ENCODE measurements at regions of chr3 and their contacts with region 1.

Region 1: GRCh38 chr3:73520865-73521461 is 103.8 kb downstream of the PDZRN3 start:
- DNase-seq: peak; percentile 61 to 90
- H3K4me3 ChIP-seq: peak overlapping the region; percentile 43 to 51
- H3K27ac ChIP-seq: peak overlapping the region; percentile 78 to 93
- H3K4me1 ChIP-seq: peaks cover 0 to 83% (median 45%) of the 10 kb centered on the region in 4 donors
- H3K27me3 ChIP-seq: no peaks in the 10 kb centered on the region
- CTCF ChIP-seq: no peak

Region 2: GRCh38 chr3:73480187-73480672 is 40.7 kb before region 1 on chr3:
- intact Hi-C with region 1: no loop called
- DNase-seq: no peak
- H3K4me3 ChIP-seq: no peak overlapping the region
- H3K27ac ChIP-seq: no peak overlapping the region
- H3K4me1 ChIP-seq: peaks cover 0 to 42% (median 7%) of the 10 kb centered on the region in 4 donors
- H3K27me3 ChIP-seq: no peaks in the 10 kb centered on the region
- CTCF ChIP-seq: no peak

Region 3: DNA sequence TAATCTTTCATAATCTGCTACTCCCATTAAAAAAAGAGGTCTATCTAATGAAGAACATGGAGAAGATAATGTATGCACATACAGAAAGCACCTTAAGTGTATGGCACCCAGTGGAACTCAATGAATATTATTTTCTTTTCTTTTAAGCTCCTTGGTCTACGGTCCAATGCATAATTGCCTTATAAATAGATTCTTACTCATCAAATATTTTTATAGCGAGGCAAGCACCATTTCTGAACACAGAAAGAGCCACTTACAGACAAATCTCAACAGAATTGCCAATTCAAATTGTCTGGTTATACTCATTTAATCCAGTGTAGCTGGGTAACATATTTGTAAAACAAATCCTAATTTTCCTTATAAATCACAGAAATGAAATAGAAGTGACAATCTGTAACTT is 97.5 kb after region 1 on chr3:
- intact Hi-C with region 1: loop called (anchors 5 kb)
- DNase-seq: no peak
- H3K4me3 ChIP-seq: peak overlapping the region in 1 of 2 donors; percentile 15
- H3K27ac ChIP-seq: peak overlapping the region; percentile 88 to 93
- H3K4me1 ChIP-seq: peaks cover 0 to 75% (median 40%) of the 10 kb centered on the region in 4 donors
- H3K27me3 ChIP-seq: no peaks in the 10 kb centered on the region
- CTCF ChIP-seq: no peak